ENCODE measurements at regions of chr14 and their contacts with region 1.

Region 1: GRCh38 chr14:36320200-36320896 is at the start of gene MBIP:
- DNase-seq: peak; percentile 96
- H3K4me3 ChIP-seq: peak within 1 kb of the TSS; percentile 95 to 98 (median 97)
- H3K27ac ChIP-seq: peak within 1 kb of the TSS; percentile 43
- H3K4me1 ChIP-seq: peaks cover 27% of the 10 kb centered on the region
- H3K27me3 ChIP-seq: peaks cover 8 to 37% of the 10 kb centered on the region in 2 experiments
- CTCF ChIP-seq: no peak
- POLR2A ChIP-seq: no peak
- total RNA-seq, gene MBIP: 14.5 and 19.0 TPM in 2 replicates

Region 2: DNA sequence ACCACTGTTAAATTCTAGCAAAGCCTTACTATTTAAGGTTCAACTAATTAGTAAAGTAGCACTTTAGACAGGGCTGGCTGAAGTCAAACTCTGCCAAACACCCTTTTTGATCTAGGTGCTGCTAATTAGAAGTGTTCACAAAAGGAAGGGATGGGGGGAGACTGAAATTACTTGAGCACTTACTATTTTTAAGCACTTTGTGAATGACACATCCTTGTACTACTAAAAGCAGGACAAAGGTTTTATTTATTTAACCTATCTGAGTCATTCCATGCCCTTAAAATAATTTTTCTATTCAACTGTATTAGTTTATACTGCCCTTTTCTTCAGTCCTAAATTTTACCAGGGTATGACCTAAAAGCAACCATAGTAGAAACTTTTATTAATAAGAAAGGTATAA is 20.0 kb before region 1 on chr14:
- CTCF ChIA-PET with region 1: no interaction called
- POLR2A ChIA-PET with region 1: no interaction called
- dilution Hi-C with region 1: no loop called
- intact Hi-C with region 1: loop called (anchors 2 kb)
- DNase-seq: peak; percentile 21
- H3K4me3 ChIP-seq: no peak overlapping the region
- H3K27ac ChIP-seq: no peak overlapping the region
- H3K4me1 ChIP-seq: peaks cover 9% of the 10 kb centered on the region
- H3K27me3 ChIP-seq: no peaks in the 10 kb centered on the region
- CTCF ChIP-seq: no peak
- POLR2A ChIP-seq: no peak

Region 3: GRCh38 chr14:36306836-36307235 is 13.5 kb before region 1 on chr14:
- CTCF ChIA-PET with region 1: no interaction called
- POLR2A ChIA-PET with region 1: no interaction called
- dilution Hi-C with region 1: no loop called
- intact Hi-C with region 1: loop called (anchors 1 kb)
- DNase-seq: no peak
- H3K4me3 ChIP-seq: no peak overlapping the region
- H3K27ac ChIP-seq: no peak overlapping the region
- H3K4me1 ChIP-seq: no peaks in the 10 kb centered on the region
- H3K27me3 ChIP-seq: no peaks in the 10 kb centered on the region
- CTCF ChIP-seq: no peak
- POLR2A ChIP-seq: no peak